HCT116 (cell line): ENCODE measurements at regions of chr12 and their contacts with region 1.

Region 1: DNA sequence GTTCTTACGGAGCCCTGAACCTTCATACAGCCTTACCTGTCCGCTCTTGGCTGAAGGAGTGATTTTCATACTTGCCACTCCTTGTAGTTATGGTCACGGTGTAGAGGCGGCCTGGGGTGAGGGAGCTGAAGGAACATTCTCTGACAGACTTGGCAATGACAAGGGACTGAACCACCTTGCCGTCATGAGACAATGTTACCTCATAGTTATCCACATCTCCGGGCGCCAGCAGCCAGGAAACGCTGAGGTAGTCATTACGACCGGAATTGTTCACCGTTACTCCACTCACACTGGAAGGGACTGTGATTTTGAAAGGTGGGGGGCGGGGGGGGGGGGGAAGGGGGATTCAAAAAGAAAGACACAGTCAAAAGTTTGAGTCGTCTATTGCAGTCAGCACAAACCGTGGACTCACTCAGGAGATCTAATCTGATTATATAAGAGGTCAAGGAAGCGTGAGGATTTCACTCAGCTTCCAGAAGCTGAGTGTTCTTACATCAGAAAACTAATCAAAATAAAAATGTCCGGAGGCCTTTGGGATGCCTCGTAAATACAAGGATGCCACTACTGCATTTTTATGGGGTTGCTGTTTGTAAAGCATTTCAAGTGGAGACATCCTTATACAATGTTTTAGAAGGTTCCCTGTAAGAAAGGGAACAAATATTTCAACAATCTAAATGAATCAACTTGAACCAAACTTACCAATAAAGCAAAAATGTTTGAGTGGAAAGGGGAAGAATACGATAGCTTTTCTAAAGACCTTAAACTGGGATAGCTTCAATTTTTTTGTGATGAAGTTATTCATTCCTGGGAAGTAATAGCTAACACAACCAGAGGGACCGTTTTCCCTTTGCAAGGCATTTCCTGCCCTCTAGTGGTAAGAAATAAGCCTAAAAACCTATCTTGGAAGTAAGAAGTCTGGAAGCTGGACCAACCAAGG is 60.6 kb downstream of the PTPRB start:
- DNase-seq: peak; percentile 66
- ATAC-seq: peak; percentile 90
- H3K4me3 ChIP-seq: no peak overlapping the region
- H3K27ac ChIP-seq: no peak overlapping the region
- H3K4me1 ChIP-seq: no peaks in the 10 kb centered on the region
- H3K27me3 ChIP-seq: no peaks in the 10 kb centered on the region
- CTCF ChIP-seq: peak; percentile 65 to 91 (median 87)
- POLR2A ChIP-seq: no peak
- RAD21 ChIP-seq: peak; percentile 97

Region 2: GRCh38 chr12:69779928-69780327 is 796.7 kb before region 1 on chr12:
- CTCF ChIA-PET with region 1: interaction called, 10 read pairs
- POLR2A ChIA-PET with region 1: no interaction called
- RAD21 ChIA-PET with region 1: no interaction called
- intact Hi-C with region 1: loop called (anchors 10 kb)
- DNase-seq: peak; percentile 27
- ATAC-seq: peak; percentile 93
- H3K4me3 ChIP-seq: no peak overlapping the region
- H3K27ac ChIP-seq: no peak overlapping the region
- H3K4me1 ChIP-seq: no peaks in the 10 kb centered on the region
- H3K27me3 ChIP-seq: no peaks in the 10 kb centered on the region
- CTCF ChIP-seq: peak; percentile 34 to 84 (median 75); a peak in 5 of 6 replicates
- POLR2A ChIP-seq: no peak
- RAD21 ChIP-seq: peak; percentile 71

Region 3: DNA sequence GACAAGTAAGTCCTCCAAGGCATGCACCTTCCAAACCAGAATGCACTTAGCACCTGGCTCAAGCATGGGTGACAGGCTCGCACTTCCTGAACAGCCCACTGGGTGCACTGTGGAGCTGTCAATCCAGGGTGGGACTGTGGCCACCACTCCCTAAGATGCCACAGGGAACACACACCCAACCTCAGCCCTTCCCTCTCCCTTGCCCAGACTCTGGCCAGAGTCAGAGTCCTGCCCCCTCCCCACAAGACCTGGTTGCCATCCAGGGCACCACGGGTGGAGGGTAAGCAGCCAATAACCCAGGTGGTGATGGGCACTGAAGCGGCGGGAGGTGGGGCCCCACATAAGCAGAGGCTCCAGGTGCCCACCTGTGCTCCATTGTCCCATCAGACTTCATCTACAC is 591.0 kb before region 1 on chr12:
- CTCF ChIA-PET with region 1: no interaction called
- POLR2A ChIA-PET with region 1: no interaction called
- RAD21 ChIA-PET with region 1: no interaction called
- intact Hi-C with region 1: loop called (anchors 10 kb)
- DNase-seq: peak; percentile 54
- ATAC-seq: peak; percentile 98
- H3K4me3 ChIP-seq: no peak overlapping the region
- H3K27ac ChIP-seq: no peak overlapping the region
- H3K4me1 ChIP-seq: peaks cover 12 to 24% of the 10 kb centered on the region in 2 experiments
- H3K27me3 ChIP-seq: no peaks in the 10 kb centered on the region
- CTCF ChIP-seq: peak; percentile 16 to 90 (median 81); a peak in 4 of 6 replicates
- POLR2A ChIP-seq: no peak
- RAD21 ChIP-seq: peak; percentile 79